ENCODE measurements at regions of chr18 and their contacts with region 1.

Region 1: GRCh38 chr18:48345596-48345995 is 63.6 kb downstream of the ZBTB7C start:
- DNase-seq: peak in 2 of 7 donors; percentile 18 to 52
- H3K4me3 ChIP-seq: no peak overlapping the region
- H3K27ac ChIP-seq: no peak overlapping the region
- H3K4me1 ChIP-seq: peaks cover 21 to 49% of the 10 kb centered on the region in 2 donors
- H3K27me3 ChIP-seq: no peaks in the 10 kb centered on the region
- CTCF ChIP-seq: peak in 4 of 6 experiments; percentile 22 to 33 (median 26)
- POLR2A ChIP-seq: no peak

Region 2: GRCh38 chr18:48030616-48031480 is 314.7 kb before region 1 on chr18:
- intact Hi-C with region 1: no loop called
- DNase-seq: peak; percentile 69 to 87 (median 76)
- H3K4me3 ChIP-seq: no peak overlapping the region
- H3K27ac ChIP-seq: peak overlapping the region in 2 of 5 donors; percentile 35 to 40
- H3K4me1 ChIP-seq: peaks cover 33 to 49% of the 10 kb centered on the region in 2 donors
- H3K27me3 ChIP-seq: no peaks in the 10 kb centered on the region
- CTCF ChIP-seq: peak; percentile 50 to 83 (median 80)
- POLR2A ChIP-seq: no peak

Region 3: DNA sequence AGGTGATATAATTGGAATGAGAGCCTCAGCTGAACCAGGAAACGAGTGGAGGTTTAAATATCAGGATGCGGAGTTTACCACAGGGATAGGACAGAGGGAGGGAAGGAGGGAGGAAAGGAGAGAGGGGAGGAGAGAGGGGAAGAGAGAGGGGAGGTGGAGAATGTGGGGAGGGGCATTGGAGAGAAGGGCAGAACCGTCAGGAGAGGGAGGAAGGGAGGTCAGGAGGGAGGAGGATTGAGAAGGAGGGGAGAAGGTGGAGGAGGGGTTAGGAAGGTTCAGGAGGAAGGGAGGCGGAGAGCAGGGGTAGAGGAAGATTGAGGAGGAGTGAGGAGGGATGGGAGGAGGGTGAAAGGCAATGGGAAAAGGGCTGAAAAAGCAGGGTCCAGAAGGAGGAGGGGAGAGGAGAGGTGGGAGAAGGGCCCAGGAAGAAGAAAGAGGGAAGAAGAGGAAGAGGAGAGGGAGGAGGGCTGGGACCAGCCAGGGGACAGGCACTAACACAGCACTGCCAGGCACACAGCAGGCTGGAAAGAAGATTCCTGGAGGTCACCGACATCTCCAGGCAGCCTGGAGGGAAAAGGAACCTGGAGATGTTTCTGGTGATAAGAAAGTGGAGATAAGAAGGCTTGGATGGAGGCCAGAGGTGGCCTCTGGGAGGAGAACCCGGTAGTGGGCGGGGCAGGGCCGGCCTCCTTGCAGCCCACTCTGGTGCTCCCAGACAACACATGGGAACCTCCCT is 238.5 kb before region 1 on chr18:
- intact Hi-C with region 1: no loop called
- DNase-seq: peak in 6 of 7 donors; percentile 43 to 69 (median 58)
- H3K4me3 ChIP-seq: no peak overlapping the region
- H3K27ac ChIP-seq: no peak overlapping the region
- H3K4me1 ChIP-seq: peaks cover 6 to 9% of the 10 kb centered on the region in 2 donors
- H3K27me3 ChIP-seq: no peaks in the 10 kb centered on the region
- CTCF ChIP-seq: no peak
- POLR2A ChIP-seq: no peak

Region 4: GRCh38 chr18:48317781-48318381 is 27.7 kb before region 1 on chr18:
- intact Hi-C with region 1: no loop called
- DNase-seq: no peak
- H3K4me3 ChIP-seq: no peak overlapping the region
- H3K27ac ChIP-seq: no peak overlapping the region
- H3K4me1 ChIP-seq: peaks cover 13 to 18% of the 10 kb centered on the region in 2 donors
- H3K27me3 ChIP-seq: no peaks in the 10 kb centered on the region
- CTCF ChIP-seq: peak in 2 of 6 experiments; percentile 30 to 34
- POLR2A ChIP-seq: no peak

Region 5: GRCh38 chr18:48399303-48400075 is 53.9 kb after region 1 on chr18:
- intact Hi-C with region 1: loop called (anchors 5 to 10 kb)
- DNase-seq: peak; percentile 55 to 71 (median 62)
- H3K4me3 ChIP-seq: no peak overlapping the region
- H3K27ac ChIP-seq: peak overlapping the region in 2 of 5 donors; percentile 24 to 27
- H3K4me1 ChIP-seq: peaks cover 6 to 33% of the 10 kb centered on the region in 2 donors
- H3K27me3 ChIP-seq: no peaks in the 10 kb centered on the region
- CTCF ChIP-seq: no peak
- POLR2A ChIP-seq: no peak

Region 6: GRCh38 chr18:48428475-48429177 is 83.0 kb after region 1 on chr18:
- intact Hi-C with region 1: no loop called
- DNase-seq: no peak
- H3K4me3 ChIP-seq: no peak overlapping the region
- H3K27ac ChIP-seq: no peak overlapping the region
- H3K4me1 ChIP-seq: no peaks in the 10 kb centered on the region
- H3K27me3 ChIP-seq: no peaks in the 10 kb centered on the region
- CTCF ChIP-seq: no peak
- POLR2A ChIP-seq: no peak

Measured in adrenal gland (tissue), 19 donors.